MCF 10A (cell line): ENCODE measurements at regions of chr7 and their contacts with region 1.

Region 1: DNA sequence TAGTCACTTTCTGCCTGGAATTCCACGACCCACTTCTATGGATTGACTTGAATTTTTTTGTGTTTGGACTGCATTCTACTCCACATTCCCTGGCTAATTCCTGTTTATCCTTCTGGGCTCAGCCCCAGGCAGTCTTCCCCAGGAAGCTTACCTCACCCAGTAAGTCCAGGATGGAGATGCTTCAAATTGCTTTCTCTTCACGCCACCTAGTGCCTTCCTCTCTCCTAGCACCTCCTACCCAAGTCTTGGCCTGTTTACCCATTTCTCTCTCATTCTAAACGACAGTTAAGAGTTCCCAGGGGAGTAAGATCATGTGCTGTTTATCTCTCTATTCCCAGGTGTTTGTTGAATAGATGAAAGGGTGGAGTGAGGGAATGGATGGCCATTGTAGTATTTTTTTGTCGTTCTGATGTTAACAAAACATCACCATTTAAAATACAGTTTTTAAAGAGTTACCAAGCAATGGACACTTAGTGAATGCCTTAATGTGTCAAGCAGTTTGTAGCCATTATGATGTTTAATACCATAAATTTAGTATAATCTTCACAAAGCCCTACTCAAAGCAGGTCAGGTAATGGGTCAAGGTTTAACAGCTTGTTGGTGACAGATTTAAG is 45.5 kb upstream of the TARP start:
- DNase-seq: peak; percentile 68
- H3K4me3 Mint-ChIP-seq: no peak overlapping the region
- H3K27ac Mint-ChIP-seq: no peak overlapping the region
- H3K4me1 Mint-ChIP-seq: peaks cover 7% of the 10 kb centered on the region
- H3K27me3 Mint-ChIP-seq: peaks cover 26% of the 10 kb centered on the region
- CTCF ChIP-seq: peak; percentile 49

Region 2: GRCh38 chr7:38335492-38336147 is 16.7 kb after region 1 on chr7:
- CTCF ChIA-PET with region 1: interaction called, 43 read pairs
- POLR2A ChIA-PET with region 1: interaction called, 3 read pairs
- intact Hi-C with region 1: no loop called
- DNase-seq: peak; percentile 87
- H3K4me3 Mint-ChIP-seq: no peak overlapping the region
- H3K27ac Mint-ChIP-seq: no peak overlapping the region
- H3K4me1 Mint-ChIP-seq: no peaks in the 10 kb centered on the region
- H3K27me3 Mint-ChIP-seq: peaks cover 13% of the 10 kb centered on the region
- CTCF ChIP-seq: peak; percentile 81

Region 3: DNA sequence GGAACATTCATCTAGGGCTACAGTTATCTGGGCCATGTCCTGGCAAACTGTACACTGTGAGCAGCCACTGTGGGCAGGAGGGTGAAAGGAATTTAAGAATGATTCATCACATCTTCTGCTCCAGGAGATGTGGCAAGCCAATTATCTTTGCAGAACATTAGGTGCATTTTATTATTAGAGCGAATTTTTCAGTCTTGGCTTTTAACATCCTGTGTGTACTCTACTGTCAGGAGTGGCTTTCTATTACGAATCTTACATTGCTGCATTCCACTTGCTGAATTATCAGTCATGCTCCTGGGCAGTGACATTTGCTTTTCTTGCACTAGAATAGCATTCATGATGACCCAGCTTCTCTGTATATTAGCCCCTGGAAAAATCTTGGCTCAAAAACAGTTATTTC is 63.8 kb after region 1 on chr7:
- CTCF ChIA-PET with region 1: no interaction called
- POLR2A ChIA-PET with region 1: no interaction called
- intact Hi-C with region 1: no loop called
- DNase-seq: peak; percentile 62
- H3K4me3 Mint-ChIP-seq: no peak overlapping the region
- H3K27ac Mint-ChIP-seq: no peak overlapping the region
- H3K4me1 Mint-ChIP-seq: peaks cover 11% of the 10 kb centered on the region
- H3K27me3 Mint-ChIP-seq: peaks cover 7% of the 10 kb centered on the region
- CTCF ChIP-seq: no peak

Region 4: GRCh38 chr7:38550836-38551235 is 231.9 kb after region 1 on chr7:
- CTCF ChIA-PET with region 1: no interaction called
- POLR2A ChIA-PET with region 1: no interaction called
- intact Hi-C with region 1: no loop called
- DNase-seq: no peak
- H3K4me3 Mint-ChIP-seq: no peak overlapping the region
- H3K27ac Mint-ChIP-seq: no peak overlapping the region
- H3K4me1 Mint-ChIP-seq: no peaks in the 10 kb centered on the region
- H3K27me3 Mint-ChIP-seq: peaks cover 31% of the 10 kb centered on the region
- CTCF ChIP-seq: no peak